Activated CD4-positive, alpha-beta memory T cell treated with anti-CD3 and anti-CD28 coated beads for 36 hours (primary cell): ENCODE measurements at regions of chr13 and their contacts with region 1.

Region 1: GRCh38 chr13:48769107-48769704 is 115.5 kb downstream of the CYSLTR2 start:
- DNase-seq: peak; percentile 81
- H3K4me3 Mint-ChIP-seq: no peak overlapping the region
- H3K27ac Mint-ChIP-seq: no peak overlapping the region
- H3K4me1 Mint-ChIP-seq: peaks cover 27% of the 10 kb centered on the region
- H3K27me3 Mint-ChIP-seq: peaks cover 8% of the 10 kb centered on the region

Region 2: GRCh38 chr13:48126944-48127830 is 642.0 kb before region 1 on chr13:
- CTCF ChIA-PET with region 1: interaction called, 6 read pairs
- POLR2A ChIA-PET with region 1: no interaction called
- intact Hi-C with region 1: loop called (anchors 1 kb)
- DNase-seq: peak; percentile 26
- H3K4me3 Mint-ChIP-seq: peak overlapping the region; percentile 10
- H3K27ac Mint-ChIP-seq: no peak overlapping the region
- H3K4me1 Mint-ChIP-seq: peaks cover 22% of the 10 kb centered on the region
- H3K27me3 Mint-ChIP-seq: peaks cover 3% of the 10 kb centered on the region

Region 3: DNA sequence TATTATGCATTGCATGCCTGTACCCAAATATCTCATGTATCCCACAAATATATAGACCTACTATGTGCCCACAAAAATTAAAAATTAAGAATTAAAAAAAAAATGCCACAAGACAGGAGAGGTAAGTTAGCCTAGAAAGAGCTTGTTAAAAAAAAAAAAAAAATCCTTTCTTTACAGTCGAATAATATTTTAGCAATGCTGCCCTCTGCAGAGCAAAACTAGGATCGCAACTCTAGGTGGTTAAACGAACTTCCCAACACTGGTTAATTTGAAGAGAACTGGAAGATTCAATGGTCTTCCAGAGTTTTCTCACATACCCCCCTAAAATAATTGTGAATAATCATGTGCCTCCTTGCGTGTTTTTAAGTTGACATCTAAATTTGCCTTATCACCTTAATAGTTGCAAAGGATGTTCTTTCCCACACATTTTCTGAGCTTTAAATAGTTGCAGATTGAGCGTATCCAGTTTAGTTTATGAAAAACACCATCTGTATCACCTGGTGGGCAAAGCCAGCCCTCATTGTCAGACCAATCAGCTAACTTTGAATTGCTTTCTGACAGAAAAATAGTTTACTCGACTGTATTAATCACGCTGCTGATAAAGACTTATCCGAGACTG is 188.9 kb before region 1 on chr13:
- CTCF ChIA-PET with region 1: interaction called, 76 read pairs
- POLR2A ChIA-PET with region 1: no interaction called
- intact Hi-C with region 1: no loop called
- DNase-seq: peak; percentile 75
- H3K4me3 Mint-ChIP-seq: no peak overlapping the region
- H3K27ac Mint-ChIP-seq: no peak overlapping the region
- H3K4me1 Mint-ChIP-seq: peaks cover 4% of the 10 kb centered on the region
- H3K27me3 Mint-ChIP-seq: peaks cover 7% of the 10 kb centered on the region

Region 4: GRCh38 chr13:48653472-48653939 is 115.7 kb before region 1 on chr13 and contains the start of gene CYSLTR2:
- CTCF ChIA-PET with region 1: interaction called, 4 read pairs
- POLR2A ChIA-PET with region 1: no interaction called
- intact Hi-C with region 1: loop called (anchors 2 kb)
- DNase-seq: peak; percentile 16
- H3K4me3 Mint-ChIP-seq: peak within 1 kb of the TSS; percentile 75
- H3K27ac Mint-ChIP-seq: peak within 1 kb of the TSS; percentile 81
- H3K4me1 Mint-ChIP-seq: peaks cover 33% of the 10 kb centered on the region
- H3K27me3 Mint-ChIP-seq: no peaks in the 10 kb centered on the region
- total RNA-seq, gene CYSLTR2: 2.1 to 2.4 TPM

Region 5: DNA sequence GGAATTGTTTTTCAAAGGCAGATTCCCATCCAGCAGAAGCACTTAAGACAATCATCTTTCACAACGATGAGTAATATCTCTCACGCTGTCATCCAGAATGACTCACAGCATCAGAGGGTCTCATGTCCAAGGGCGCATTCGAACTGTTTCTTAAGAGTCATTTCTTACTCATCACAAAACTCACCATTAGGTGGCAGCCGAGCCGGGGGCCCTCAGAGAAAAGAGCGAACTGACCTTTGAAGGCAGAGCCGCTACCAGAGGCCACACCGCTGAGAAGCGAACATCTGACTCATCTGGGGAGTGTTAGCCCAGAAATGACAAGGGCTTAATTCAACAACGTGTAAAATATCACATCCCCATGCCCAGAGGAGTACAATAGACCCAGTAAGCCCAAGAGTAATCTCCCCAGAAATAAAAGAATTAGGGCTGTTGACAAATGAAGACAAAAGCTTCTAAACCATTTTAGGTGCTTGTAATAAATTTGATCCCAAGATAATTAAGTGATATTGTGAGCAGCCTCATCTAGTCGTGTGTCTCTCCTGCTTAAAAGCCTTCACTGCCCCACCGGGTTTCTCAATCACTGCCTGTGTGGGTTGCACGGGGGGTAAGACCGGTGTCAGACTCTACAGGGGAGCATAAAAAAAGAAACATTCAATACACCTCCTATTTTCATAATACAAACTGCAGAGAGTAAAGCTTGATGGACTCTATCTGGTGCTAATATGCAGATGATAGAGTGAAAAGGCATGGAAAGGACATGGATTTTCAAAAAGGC is 19.3 kb before region 1 on chr13:
- CTCF ChIA-PET with region 1: interaction called, 14 read pairs
- POLR2A ChIA-PET with region 1: no interaction called
- intact Hi-C with region 1: loop called (anchors 1 kb)
- DNase-seq: peak; percentile 89
- H3K4me3 Mint-ChIP-seq: peak overlapping the region; percentile 0
- H3K27ac Mint-ChIP-seq: peak overlapping the region; percentile 16
- H3K4me1 Mint-ChIP-seq: peaks cover 19% of the 10 kb centered on the region
- H3K27me3 Mint-ChIP-seq: no peaks in the 10 kb centered on the region

Region 6: DNA sequence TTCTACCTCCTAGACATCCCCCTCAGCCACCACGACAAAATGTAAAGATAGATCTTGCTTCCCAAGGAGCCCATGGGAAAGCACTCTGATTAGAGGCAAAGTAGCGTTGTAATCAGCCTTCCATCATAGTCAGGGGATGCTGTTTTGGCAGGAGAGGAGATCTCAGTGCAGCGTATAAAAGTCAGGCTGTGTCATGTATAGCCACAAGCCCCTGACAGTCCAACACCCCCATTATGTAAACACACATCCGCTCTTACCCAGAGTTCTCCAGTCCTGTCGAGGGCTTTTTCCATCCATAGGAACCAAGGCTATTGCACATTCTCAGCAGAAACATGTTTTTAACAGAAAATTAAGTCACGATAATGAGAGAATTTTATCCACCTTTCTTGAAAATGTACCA is 40.8 kb after region 1 on chr13:
- CTCF ChIA-PET with region 1: no interaction called
- POLR2A ChIA-PET with region 1: no interaction called
- intact Hi-C with region 1: no loop called
- DNase-seq: no peak
- H3K4me3 Mint-ChIP-seq: no peak overlapping the region
- H3K27ac Mint-ChIP-seq: no peak overlapping the region
- H3K4me1 Mint-ChIP-seq: peaks cover 28% of the 10 kb centered on the region
- H3K27me3 Mint-ChIP-seq: peaks cover 3% of the 10 kb centered on the region

Region 7: DNA sequence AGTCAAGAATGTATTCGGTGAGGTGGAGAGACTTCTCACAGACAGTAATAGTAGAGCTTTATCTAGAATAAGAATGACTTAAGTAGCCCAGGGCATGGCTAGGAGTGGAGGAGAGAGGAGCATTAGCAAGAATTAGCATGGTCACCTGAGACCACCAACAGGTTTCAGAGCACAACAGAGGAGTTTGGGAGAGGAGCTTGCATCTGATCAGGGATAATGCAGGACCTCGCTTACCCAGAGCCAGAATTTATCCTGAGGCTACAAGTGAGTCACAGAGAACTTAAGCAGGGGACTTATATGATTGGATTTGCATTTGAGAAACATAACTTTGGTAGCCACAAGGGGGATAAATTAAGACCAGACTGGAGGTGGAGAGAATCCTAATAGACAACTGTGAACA is 104.4 kb after region 1 on chr13:
- CTCF ChIA-PET with region 1: no interaction called
- POLR2A ChIA-PET with region 1: no interaction called
- intact Hi-C with region 1: no loop called
- DNase-seq: no peak
- H3K4me3 Mint-ChIP-seq: no peak overlapping the region
- H3K27ac Mint-ChIP-seq: no peak overlapping the region
- H3K4me1 Mint-ChIP-seq: no peaks in the 10 kb centered on the region
- H3K27me3 Mint-ChIP-seq: no peaks in the 10 kb centered on the region